ENCODE measurements at regions of chr5 and their contacts with region 1.

Region 1: GRCh38 chr5:91730026-91730425 is 346.9 kb upstream of the ARRDC3 start:
- DNase-seq: no peak
- ATAC-seq: no peak
- H3K4me3 ChIP-seq: no peak overlapping the region
- H3K27ac ChIP-seq: no peak overlapping the region
- H3K4me1 ChIP-seq: no peaks in the 10 kb centered on the region
- H3K27me3 ChIP-seq: no peaks in the 10 kb centered on the region
- CTCF ChIP-seq: no peak

Region 2: GRCh38 chr5:91777671-91778070 is 47.6 kb after region 1 on chr5:
- CTCF ChIA-PET with region 1: no interaction called
- POLR2A ChIA-PET with region 1: no interaction called
- in situ Hi-C with region 1: no loop called
- intact Hi-C with region 1: no loop called
- DNase-seq: no peak
- ATAC-seq: no peak
- H3K4me3 ChIP-seq: no peak overlapping the region
- H3K27ac ChIP-seq: no peak overlapping the region
- H3K4me1 ChIP-seq: no peaks in the 10 kb centered on the region
- H3K27me3 ChIP-seq: no peaks in the 10 kb centered on the region
- CTCF ChIP-seq: no peak

Region 3: GRCh38 chr5:92003806-92004205 is 273.8 kb after region 1 on chr5:
- CTCF ChIA-PET with region 1: no interaction called
- POLR2A ChIA-PET with region 1: no interaction called
- in situ Hi-C with region 1: no loop called
- intact Hi-C with region 1: no loop called
- DNase-seq: no peak
- ATAC-seq: no peak
- H3K4me3 ChIP-seq: no peak overlapping the region
- H3K27ac ChIP-seq: no peak overlapping the region
- H3K4me1 ChIP-seq: no peaks in the 10 kb centered on the region; the same call in 1 of the 2 replicates
- H3K27me3 ChIP-seq: no peaks in the 10 kb centered on the region
- CTCF ChIP-seq: no peak

Region 4: DNA sequence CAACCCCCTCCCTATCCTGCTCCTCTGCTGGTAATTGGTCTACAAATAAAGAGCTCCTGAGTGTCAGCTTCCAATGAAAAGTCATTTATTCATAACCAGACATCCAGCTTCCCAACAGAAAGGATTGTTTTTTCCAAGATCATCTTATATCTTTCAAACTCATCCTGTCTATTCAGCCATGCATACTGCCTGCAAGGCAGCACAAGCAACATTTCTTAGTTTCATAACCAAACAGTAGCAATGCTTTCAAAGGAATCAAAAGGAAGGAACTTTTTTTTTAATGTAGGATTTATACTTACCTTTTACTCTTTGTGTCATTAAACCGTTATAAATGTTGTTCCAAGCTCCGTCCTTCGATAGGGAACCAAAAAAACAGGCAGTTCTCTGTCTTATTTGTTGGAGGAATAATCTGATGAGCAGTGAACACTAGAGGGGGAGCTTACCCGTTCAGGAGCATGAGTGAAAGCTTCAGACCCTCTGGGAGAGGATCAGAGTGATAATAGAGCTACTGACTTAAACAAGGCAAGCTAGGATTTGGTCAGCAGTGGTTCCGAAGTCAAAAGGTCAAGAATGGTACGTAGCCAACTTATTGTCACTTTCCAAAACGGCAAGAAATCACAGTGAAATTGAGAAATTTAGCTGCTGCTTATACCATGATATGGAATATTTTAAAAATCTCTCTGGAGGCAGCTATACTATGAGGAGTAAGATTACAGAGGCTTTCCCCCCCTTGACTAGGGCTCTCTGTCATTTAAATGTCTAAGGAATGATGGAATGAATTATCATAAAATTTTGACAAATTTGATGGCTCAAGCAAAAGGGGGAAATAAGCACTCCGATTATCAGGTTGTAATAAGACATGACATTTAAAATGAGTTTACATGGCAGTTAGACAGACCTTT is 958.0 kb after region 1 on chr5:
- CTCF ChIA-PET with region 1: no interaction called
- POLR2A ChIA-PET with region 1: interaction called, 12 read pairs
- in situ Hi-C with region 1: no loop called
- intact Hi-C with region 1: no loop called
- DNase-seq: no peak
- ATAC-seq: peak; percentile 88
- H3K4me3 ChIP-seq: no peak overlapping the region
- H3K27ac ChIP-seq: peak overlapping the region; percentile 68
- H3K4me1 ChIP-seq: no peaks in the 10 kb centered on the region; the same call in 1 of the 2 replicates
- H3K27me3 ChIP-seq: no peaks in the 10 kb centered on the region
- CTCF ChIP-seq: peak; percentile 69

Measured in Panc1 (cell line).